Transverse colon (tissue), 4 donors: ENCODE measurements at regions of chr6 and their contacts with region 1.

Region 1: GRCh38 chr6:118558464-118559217 is 10.5 kb downstream of the PLN start:
- DNase-seq: no peak
- H3K4me3 ChIP-seq: no peak overlapping the region
- H3K27ac ChIP-seq: peak overlapping the region in 3 of 4 donors; percentile 13 to 43 (median 38)
- H3K4me1 ChIP-seq: peaks cover 0 to 14% (median 0%) of the 10 kb centered on the region in 4 donors
- H3K27me3 ChIP-seq: no peaks in the 10 kb centered on the region
- CTCF ChIP-seq: no peak
- EP300 ChIP-seq: no peak
- POLR2A ChIP-seq: no peak

Region 2: DNA sequence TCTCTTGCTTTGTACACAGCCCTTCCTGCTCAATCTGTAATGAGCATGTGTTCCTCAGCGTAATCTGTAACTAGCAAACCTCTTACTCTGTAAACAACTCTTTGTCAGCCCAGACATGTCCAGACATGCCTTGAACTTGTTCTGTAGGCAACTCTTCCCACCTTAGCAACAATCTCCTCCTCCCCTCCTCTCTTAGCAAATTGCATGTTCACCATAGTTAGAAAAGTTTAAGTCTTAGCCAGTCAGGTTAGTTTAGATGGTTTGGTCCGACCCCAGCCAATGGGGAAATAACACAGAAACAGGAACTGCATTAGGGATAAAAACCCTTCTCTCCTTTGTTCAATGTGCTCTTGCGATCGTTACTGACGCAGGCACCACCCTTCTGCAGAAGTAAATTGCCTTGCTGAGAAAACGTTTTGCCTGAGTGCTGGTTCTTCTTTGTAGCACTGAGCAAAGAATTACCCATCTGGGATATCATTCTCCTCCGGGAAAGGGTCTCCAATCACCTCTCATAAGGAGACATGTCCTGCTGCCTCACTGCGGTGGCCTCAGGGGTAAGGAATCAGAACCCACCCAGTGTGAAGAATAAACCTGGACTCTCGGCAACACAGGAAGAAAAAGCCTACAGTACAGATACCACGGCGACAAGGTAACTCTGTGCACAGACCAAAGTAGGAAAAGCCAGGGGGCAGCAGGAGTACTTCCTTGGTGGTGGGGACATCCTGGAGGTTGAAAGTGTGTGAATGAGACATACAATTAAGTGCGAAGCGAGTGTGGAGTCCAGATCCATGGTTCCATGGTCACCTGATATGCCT is 15.6 kb after region 1 on chr6:
- in situ Hi-C with region 1: no loop called
- intact Hi-C with region 1: loop called (anchors 1 kb)
- DNase-seq: no peak
- H3K4me3 ChIP-seq: no peak overlapping the region
- H3K27ac ChIP-seq: no peak overlapping the region
- H3K4me1 ChIP-seq: no peaks in the 10 kb centered on the region
- H3K27me3 ChIP-seq: no peaks in the 10 kb centered on the region
- CTCF ChIP-seq: no peak
- EP300 ChIP-seq: no peak
- POLR2A ChIP-seq: no peak

Region 3: DNA sequence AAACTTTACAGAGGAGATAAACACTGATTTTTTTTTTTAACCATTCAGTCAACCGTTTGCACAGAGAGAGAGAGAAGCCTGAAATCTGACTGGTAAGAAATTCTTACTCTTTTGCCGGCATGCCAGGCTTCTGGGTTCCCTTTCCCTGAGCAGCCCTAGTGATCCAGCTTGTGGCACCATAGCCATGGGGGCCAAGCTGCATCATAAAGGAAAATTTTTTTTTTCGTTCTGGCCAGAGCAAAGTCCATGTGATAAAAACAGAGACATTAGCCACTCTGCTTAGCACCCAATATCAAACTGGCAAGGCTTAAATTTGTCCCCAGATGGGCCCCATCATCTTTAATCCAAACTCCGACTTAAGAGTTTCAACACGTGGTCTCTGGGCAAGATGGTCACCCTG is 48.2 kb after region 1 on chr6:
- in situ Hi-C with region 1: no loop called
- intact Hi-C with region 1: no loop called
- DNase-seq: no peak
- H3K4me3 ChIP-seq: no peak overlapping the region
- H3K27ac ChIP-seq: no peak overlapping the region
- H3K4me1 ChIP-seq: peaks cover 0 to 11% (median 3%) of the 10 kb centered on the region in 4 donors
- H3K27me3 ChIP-seq: no peaks in the 10 kb centered on the region
- CTCF ChIP-seq: no peak
- EP300 ChIP-seq: no peak
- POLR2A ChIP-seq: no peak

Region 4: GRCh38 chr6:118651282-118652050 is 92.8 kb after region 1 on chr6 and contains the start of gene CEP85L:
- in situ Hi-C with region 1: no loop called
- intact Hi-C with region 1: no loop called
- DNase-seq: peak; percentile 90
- H3K4me3 ChIP-seq: peak within 1 kb of the TSS; percentile 62 to 91 (median 80)
- H3K27ac ChIP-seq: peak within 1 kb of the TSS; percentile 87 to 99 (median 96)
- H3K4me1 ChIP-seq: peaks cover 5 to 23% (median 8%) of the 10 kb centered on the region in 4 donors
- H3K27me3 ChIP-seq: peaks cover 13% of the 10 kb centered on the region
- CTCF ChIP-seq: peak in 1 of 5 experiments; percentile 6
- EP300 ChIP-seq: no peak
- POLR2A ChIP-seq: peak; percentile 81
- total RNA-seq, gene CEP85L: 5.3 to 10.5 (median 8.7) TPM